ENCODE measurements at regions of chr2 and their contacts with region 1.

Region 1: DNA sequence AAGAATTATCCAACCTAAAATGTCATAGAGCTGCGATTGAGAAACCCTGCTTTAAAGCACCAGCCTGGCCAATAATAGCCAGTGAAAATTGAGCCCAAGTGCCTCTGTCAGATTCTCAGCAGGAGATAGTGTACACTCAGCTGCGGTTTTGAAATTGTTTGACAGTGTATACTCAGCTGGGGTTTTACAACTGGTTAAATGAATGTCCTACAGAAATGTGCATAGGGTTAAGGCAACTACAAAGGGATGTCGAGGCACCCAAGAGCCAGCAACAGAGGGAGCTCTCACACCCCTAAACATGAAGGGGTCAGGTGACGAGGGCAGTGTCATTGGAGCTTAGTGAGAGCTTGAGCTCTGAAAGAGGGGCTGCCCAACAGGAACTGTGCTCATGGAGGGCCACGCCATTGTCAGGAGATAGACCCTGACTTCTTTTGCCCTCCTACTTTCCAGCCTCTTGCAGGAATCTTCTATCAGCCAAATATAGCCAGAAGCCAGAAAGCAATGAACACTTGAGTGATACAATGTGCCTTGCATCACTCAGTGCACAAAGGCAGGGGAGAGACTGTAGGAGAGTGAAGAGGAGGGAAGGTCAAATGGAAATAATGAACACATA is 15.1 kb downstream of the ACTG2 start:
- DNase-seq: peak; percentile 30 to 79 (median 47)
- ATAC-seq: peak; percentile 82
- H3K4me3 ChIP-seq: no peak overlapping the region
- H3K4me3 Mint-ChIP-seq: no peak overlapping the region
- H3K27ac ChIP-seq: no peak overlapping the region
- H3K27ac Mint-ChIP-seq: no peak overlapping the region
- H3K4me1 ChIP-seq: no peaks in the 10 kb centered on the region
- H3K4me1 Mint-ChIP-seq: no peaks in the 10 kb centered on the region
- H3K27me3 ChIP-seq: no peaks in the 10 kb centered on the region
- H3K27me3 Mint-ChIP-seq: no peaks in the 10 kb centered on the region
- CTCF ChIP-seq: peak; percentile 61

Region 2: GRCh38 chr2:74104839-74105238 is 196.9 kb after region 1 on chr2:
- CTCF ChIA-PET with region 1: no interaction called
- POLR2A ChIA-PET with region 1: no interaction called
- intact Hi-C with region 1: loop called (anchors 1 to 2 kb)
- DNase-seq: peak in 2 of 14 experiments; percentile 23 to 28
- ATAC-seq: peak; percentile 49
- H3K4me3 ChIP-seq: no peak overlapping the region
- H3K4me3 Mint-ChIP-seq: no peak overlapping the region
- H3K27ac ChIP-seq: no peak overlapping the region
- H3K27ac Mint-ChIP-seq: no peak overlapping the region
- H3K4me1 ChIP-seq: no peaks in the 10 kb centered on the region
- H3K4me1 Mint-ChIP-seq: no peaks in the 10 kb centered on the region
- H3K27me3 ChIP-seq: no peaks in the 10 kb centered on the region
- H3K27me3 Mint-ChIP-seq: no peaks in the 10 kb centered on the region
- CTCF ChIP-seq: no peak

Measured in CD4-positive, alpha-beta T cell (primary cell).